Heart left ventricle (tissue), 16 donors: ENCODE measurements at regions of chr19 and their contacts with region 1.

Region 1: DNA sequence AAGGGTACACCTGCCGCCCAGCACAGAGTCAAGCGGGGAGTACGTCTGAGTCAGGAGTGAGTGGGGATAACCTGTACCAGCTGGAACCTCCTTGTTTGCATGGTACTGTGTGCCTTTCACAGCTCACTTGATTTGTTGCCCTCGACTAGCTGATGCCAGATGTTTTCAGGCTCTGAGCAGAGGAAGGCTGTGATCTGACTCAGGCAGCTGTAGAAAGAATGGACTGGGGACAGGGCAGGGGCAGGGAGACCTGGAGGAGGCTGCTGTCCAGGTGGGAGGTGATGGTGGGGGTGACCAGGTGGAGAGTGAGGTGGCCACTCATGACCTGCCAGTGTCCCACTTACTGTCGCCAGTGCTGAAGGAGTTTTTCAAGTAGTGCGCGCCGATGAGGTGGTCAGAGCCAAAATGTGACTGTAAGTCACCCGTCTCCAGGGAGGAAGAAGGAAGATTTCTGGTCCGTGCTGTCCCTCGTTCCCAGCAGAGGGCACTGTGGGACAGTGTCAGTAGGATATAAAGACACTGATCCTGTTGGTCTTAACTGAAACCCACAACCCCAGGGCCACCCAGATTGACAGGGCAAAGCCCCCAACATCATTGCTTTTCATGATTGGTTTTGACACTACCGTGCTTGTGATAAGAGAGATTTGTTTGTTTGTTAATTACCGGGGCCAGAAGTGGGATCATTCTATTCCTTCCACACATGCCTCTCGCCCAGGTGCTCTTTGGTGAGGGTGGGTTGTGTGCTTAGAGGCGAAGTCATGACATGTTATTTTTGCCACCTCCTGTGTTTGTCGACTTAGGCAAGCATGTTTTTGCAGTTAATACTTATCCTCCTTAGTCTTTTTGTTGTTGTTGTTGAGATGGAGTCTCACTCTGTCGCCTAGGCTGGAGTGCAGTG is 128.4 kb downstream of the DPF1 start:
- DNase-seq: peak; percentile 52 to 75 (median 66)
- ATAC-seq: peak in 3 of 4 donors; percentile 45 to 77 (median 58)
- H3K4me3 ChIP-seq: no peak overlapping the region
- H3K27ac ChIP-seq: no peak overlapping the region
- H3K4me1 ChIP-seq: peaks cover 0 to 21% (median 0%) of the 10 kb centered on the region in 12 donors
- H3K27me3 ChIP-seq: no peaks in the 10 kb centered on the region
- CTCF ChIP-seq: peak; percentile 59 to 79 (median 72)
- POLR2A ChIP-seq: no peak

Region 2: GRCh38 chr19:38004521-38005223 is 91.0 kb before region 1 on chr19:
- intact Hi-C with region 1: loop called in 1 of 10 experiments (anchors 10 kb)
- DNase-seq: peak; percentile 81 to 89 (median 88)
- ATAC-seq: peak; percentile 96 to 98 (median 96)
- H3K4me3 ChIP-seq: peak overlapping the region in 11 of 12 donors; percentile 2 to 58 (median 50)
- H3K27ac ChIP-seq: peak overlapping the region; percentile 59 to 93 (median 77)
- H3K4me1 ChIP-seq: peaks cover 4 to 42% (median 22%) of the 10 kb centered on the region in 12 donors
- H3K27me3 ChIP-seq: no peaks in the 10 kb centered on the region
- CTCF ChIP-seq: no peak
- POLR2A ChIP-seq: peak in 1 of 2 donors; percentile 72